Calu3 (cell line): ENCODE measurements at regions of chr13 and their contacts with region 1.

Region 1: GRCh38 chr13:52809310-52809769 is 39.1 kb downstream of the PCDH8 start:
- DNase-seq: peak; percentile 85
- H3K4me3 Mint-ChIP-seq: no peak overlapping the region
- H3K27ac Mint-ChIP-seq: peak overlapping the region; percentile 42
- H3K4me1 Mint-ChIP-seq: peaks cover 18% of the 10 kb centered on the region
- H3K27me3 Mint-ChIP-seq: peaks cover 19% of the 10 kb centered on the region
- CTCF ChIP-seq: peak; percentile 90

Region 2: DNA sequence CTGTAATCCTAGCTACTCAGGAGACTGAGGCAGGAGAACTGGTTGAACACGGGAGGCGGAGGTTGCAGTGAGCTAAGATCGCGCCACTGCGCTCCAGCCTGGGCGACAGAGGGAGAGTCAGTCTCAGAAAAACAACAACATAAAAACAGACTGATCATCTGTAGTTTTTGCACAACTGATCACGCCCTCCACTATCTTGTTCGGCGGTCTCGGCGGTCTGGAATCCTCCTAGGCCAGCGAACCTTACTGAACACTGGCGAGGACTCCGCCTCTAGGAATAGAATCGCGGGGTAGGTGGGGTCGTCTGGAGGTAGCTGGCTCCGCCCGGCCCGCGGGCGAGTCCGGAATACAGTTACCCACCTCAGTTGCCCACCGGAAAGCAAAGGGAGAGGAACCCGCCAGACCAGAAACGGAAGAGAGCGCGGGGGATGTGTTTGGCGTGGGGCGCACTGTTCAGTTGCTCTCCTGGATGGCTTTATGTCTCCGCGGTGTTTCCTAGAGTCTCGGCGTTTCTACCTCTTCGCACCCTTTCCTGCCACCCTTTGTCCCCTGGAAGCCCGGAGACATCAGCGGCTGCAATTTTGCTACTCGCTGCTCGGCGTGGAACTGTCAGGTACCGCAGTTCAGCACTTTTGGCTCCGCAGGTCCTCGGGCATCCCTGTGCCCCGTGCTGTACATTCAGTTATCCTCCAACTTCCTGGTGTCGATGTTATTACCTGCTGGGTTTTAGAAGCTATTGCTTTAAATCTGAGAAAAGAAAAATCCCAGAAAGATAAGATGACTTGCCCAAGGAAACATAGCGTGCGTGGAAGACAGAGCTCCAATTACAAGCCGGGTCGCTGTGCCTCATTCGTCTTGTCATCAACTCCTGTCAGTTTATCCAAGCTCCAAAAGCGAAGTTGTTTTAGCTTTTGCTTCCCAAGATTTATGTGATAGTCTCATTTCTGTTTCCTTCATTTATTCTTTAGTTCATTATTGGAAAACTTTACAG is 192.0 kb before region 1 on chr13:
- CTCF ChIA-PET with region 1: no interaction called
- intact Hi-C with region 1: loop called (anchors 5 kb)
- DNase-seq: peak; percentile 89
- H3K4me3 Mint-ChIP-seq: peak overlapping the region; percentile 97
- H3K27ac Mint-ChIP-seq: peak overlapping the region; percentile 87
- H3K4me1 Mint-ChIP-seq: no peaks in the 10 kb centered on the region
- H3K27me3 Mint-ChIP-seq: no peaks in the 10 kb centered on the region
- CTCF ChIP-seq: no peak

Region 3: GRCh38 chr13:52652196-52652979 is 157.0 kb before region 1 on chr13 and contains the start of gene SUGT1:
- CTCF ChIA-PET with region 1: interaction called, 12 read pairs
- intact Hi-C with region 1: loop called (anchors 2 kb)
- DNase-seq: peak; percentile 98
- H3K4me3 Mint-ChIP-seq: no peak within 1 kb of the TSS
- H3K27ac Mint-ChIP-seq: no peak within 1 kb of the TSS
- H3K4me1 Mint-ChIP-seq: no peaks in the 10 kb centered on the region
- H3K27me3 Mint-ChIP-seq: no peaks in the 10 kb centered on the region
- CTCF ChIP-seq: no peak
- total RNA-seq, gene SUGT1: 48.0 and 58.4 TPM in 2 replicates

Region 4: DNA sequence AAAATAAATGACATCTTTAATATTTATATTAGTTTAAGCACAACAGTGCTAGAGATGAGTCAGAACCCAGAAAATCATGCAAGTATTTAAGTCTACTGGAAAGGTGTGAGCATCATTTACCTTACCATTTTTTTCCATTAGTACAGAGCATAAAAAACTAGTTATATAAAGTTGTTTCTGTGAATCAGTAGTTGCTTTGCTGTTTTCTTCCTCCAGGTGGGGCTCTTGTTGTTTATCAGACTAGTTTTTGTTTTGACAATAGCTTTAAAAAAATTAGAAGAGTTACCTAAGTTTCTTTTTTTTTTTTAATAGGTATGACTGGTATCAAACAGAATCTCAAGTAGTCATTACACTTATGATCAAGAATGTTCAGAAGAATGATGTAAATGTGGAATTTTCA is 144.0 kb before region 1 on chr13:
- CTCF ChIA-PET with region 1: interaction called, 28 read pairs
- intact Hi-C with region 1: loop called (anchors 1 kb)
- DNase-seq: no peak
- H3K4me3 Mint-ChIP-seq: no peak overlapping the region
- H3K27ac Mint-ChIP-seq: no peak overlapping the region
- H3K4me1 Mint-ChIP-seq: no peaks in the 10 kb centered on the region
- H3K27me3 Mint-ChIP-seq: no peaks in the 10 kb centered on the region
- CTCF ChIP-seq: peak; percentile 8

Region 5: GRCh38 chr13:52743988-52744387 is 65.4 kb before region 1 on chr13:
- CTCF ChIA-PET with region 1: interaction called, 3 read pairs
- intact Hi-C with region 1: loop called (anchors 1 kb)
- DNase-seq: no peak
- H3K4me3 Mint-ChIP-seq: no peak overlapping the region
- H3K27ac Mint-ChIP-seq: no peak overlapping the region
- H3K4me1 Mint-ChIP-seq: no peaks in the 10 kb centered on the region
- H3K27me3 Mint-ChIP-seq: peaks cover 93% of the 10 kb centered on the region
- CTCF ChIP-seq: no peak

Region 6: GRCh38 chr13:52786747-52787146 is 22.6 kb before region 1 on chr13:
- CTCF ChIA-PET with region 1: interaction called, 3 read pairs
- intact Hi-C with region 1: loop called (anchors 1 kb)
- DNase-seq: peak; percentile 57
- H3K4me3 Mint-ChIP-seq: no peak overlapping the region
- H3K27ac Mint-ChIP-seq: no peak overlapping the region
- H3K4me1 Mint-ChIP-seq: peaks cover 36% of the 10 kb centered on the region
- H3K27me3 Mint-ChIP-seq: no peaks in the 10 kb centered on the region
- CTCF ChIP-seq: no peak

Region 7: DNA sequence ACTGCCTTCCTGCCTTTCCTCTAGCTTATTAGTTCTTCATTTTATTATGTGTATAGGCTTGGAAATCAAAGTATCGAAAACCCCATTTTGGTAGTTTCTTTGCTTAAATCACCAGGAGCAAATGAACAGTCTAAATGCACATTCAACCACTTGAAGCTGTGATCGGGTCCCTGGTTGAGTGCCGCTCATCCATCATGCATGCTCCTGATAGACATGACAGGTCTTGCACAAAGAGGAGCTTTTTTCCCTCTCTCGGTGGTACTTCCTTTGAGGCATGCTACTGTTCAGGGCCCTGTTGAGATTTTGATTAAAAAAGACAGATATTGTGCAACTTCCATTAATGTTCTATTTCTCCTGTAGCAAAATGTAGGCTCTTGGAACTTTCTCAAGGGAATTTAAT is 405.1 kb after region 1 on chr13:
- CTCF ChIA-PET with region 1: no interaction called
- intact Hi-C with region 1: no loop called
- DNase-seq: no peak
- H3K4me3 Mint-ChIP-seq: no peak overlapping the region
- H3K27ac Mint-ChIP-seq: no peak overlapping the region
- H3K4me1 Mint-ChIP-seq: no peaks in the 10 kb centered on the region
- H3K27me3 Mint-ChIP-seq: no peaks in the 10 kb centered on the region
- CTCF ChIP-seq: no peak